ENCODE measurements at regions of chr20 and their contacts with region 1.

Region 1: DNA sequence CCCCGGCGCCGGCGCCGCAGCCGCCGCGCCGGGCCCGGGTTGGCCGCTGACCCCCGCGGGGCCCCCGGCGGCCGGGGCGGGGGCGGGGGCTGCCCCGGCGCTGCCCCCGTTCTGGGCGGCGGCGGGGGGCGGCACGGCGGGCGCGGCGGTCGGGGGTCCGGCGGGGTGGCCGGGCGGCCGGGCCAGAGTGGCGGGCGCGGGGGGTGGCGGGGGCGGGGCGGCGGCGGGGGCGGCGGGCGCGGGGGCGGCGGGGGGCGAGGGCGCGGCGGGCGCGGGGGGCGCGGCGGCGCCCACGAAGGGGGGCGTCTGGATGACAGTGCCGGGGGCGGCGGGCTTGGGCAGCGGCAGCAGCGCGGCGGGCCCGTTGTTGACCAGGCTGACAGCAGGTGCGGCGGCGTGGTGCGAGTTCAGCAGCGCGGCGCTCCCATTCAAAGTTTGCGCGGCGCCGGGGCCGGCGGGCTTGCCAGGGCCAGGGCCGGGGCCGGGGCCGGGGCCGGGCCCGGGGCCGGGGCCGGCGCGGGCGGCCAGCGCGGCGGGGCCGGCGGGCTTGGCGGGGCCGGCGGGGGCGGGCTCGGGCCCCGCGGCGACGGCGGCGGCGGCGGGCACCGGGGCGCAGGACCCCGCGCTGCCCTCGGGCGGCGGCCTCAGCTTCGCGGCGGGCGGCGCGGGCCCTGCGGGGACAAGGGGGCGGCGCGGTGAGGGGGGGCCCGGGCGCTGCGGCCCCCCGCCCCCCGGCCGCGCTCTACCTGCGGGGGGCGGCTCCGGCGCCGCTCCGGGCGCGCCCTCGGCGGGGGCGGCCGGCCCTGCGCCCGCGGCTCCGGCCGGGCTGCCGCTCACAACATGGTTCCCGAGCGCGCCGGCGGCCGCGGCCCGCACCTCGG is 653 bp downstream of the TAF4 start:
- DNase-seq: no peak
- H3K4me3 ChIP-seq: peak overlapping the region; percentile 67 to 86 (median 74)
- H3K27ac ChIP-seq: peak overlapping the region; percentile 75 to 93 (median 87)
- H3K4me1 ChIP-seq: peaks cover 36 to 48% (median 40%) of the 10 kb centered on the region in 4 donors
- H3K27me3 ChIP-seq: no peaks in the 10 kb centered on the region
- CTCF ChIP-seq: no peak
- EP300 ChIP-seq: no peak
- POLR2A ChIP-seq: no peak

Region 2: DNA sequence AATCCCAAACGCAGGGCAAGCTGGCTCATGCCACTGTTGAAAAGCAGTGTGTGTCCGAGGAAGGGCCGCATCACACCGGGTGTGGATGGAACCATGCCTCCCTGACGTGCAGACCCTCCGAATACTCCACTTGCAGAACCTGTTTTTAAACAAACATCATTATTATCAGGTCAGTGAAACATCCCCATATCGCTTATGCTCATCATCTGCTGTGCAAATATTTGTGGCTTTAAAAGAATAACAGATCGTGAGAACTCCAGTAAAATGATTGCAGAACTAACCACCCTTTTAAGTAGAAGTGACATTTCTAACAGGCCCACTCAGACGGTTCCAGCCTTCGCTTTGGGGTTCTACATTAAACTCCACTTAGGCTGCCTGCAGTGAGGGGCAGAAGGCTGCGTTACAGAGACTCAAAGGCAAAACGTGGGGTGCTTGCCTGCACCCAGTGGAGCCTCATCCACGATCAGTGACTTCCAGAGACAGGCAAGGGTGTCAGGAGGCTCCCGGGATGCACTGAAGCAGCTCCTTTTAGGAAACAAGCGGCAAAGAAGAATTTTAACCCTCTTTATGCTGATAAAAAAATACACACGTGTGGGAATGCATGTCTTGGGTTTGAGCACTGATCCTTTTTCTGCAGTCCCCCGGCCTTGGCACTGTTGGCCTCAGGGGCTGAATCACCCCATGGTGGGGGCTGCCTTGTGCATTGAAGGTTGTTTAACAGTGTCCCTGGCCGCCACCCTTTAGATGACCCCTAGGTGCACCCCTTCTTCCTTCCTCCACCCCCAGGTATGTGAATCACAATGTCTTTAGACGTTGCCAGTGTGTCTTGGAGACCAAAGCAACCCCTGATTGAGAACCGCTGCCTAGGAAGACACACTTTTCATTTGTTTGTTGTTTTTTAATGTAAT is 622.6 kb before region 1 on chr20:
- intact Hi-C with region 1: no loop called
- DNase-seq: no peak
- H3K4me3 ChIP-seq: no peak overlapping the region
- H3K27ac ChIP-seq: no peak overlapping the region
- H3K4me1 ChIP-seq: peaks cover 0 to 3% (median 0%) of the 10 kb centered on the region in 4 donors
- H3K27me3 ChIP-seq: peaks cover 0 to 7% (median 0%) of the 10 kb centered on the region in 4 donors
- CTCF ChIP-seq: no peak
- EP300 ChIP-seq: no peak
- POLR2A ChIP-seq: no peak

Region 3: DNA sequence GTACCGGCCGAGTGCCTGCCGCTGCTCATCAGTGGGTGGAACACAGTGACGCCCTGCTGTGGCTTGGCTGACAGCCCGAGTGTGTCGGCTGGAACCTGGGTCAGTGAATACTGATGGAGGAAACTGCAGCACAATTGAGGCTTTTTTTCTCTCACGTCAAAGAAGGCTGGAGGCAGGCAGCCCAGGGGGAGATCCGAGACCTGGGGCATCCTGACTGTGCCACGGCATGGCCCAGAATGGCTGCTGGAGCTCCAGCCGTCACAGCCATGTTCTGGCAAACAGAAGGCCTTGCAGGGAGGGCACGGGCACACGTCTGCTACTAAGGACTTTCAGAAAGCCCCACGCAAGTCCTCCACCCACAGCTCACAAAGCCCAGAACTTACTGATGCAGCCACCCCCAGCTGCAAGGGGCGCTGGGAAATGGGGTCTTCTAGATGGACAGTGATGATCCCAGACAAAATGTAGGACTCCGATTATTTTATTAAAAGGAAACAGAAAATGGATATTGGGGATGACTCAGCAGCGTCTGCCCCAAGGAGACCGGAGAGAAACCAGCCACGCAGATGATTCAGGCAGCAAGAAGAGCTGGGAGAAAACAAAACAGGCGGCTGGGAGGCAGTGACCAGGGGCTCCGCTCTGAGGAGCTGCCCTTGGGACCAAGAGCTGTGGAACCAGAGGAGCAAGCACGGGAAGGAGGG is 139.3 kb before region 1 on chr20:
- intact Hi-C with region 1: no loop called
- DNase-seq: no peak
- H3K4me3 ChIP-seq: no peak overlapping the region
- H3K27ac ChIP-seq: no peak overlapping the region
- H3K4me1 ChIP-seq: no peaks in the 10 kb centered on the region
- H3K27me3 ChIP-seq: peaks cover 0 to 24% (median 0%) of the 10 kb centered on the region in 4 donors
- CTCF ChIP-seq: no peak
- EP300 ChIP-seq: no peak
- POLR2A ChIP-seq: no peak

Region 4: DNA sequence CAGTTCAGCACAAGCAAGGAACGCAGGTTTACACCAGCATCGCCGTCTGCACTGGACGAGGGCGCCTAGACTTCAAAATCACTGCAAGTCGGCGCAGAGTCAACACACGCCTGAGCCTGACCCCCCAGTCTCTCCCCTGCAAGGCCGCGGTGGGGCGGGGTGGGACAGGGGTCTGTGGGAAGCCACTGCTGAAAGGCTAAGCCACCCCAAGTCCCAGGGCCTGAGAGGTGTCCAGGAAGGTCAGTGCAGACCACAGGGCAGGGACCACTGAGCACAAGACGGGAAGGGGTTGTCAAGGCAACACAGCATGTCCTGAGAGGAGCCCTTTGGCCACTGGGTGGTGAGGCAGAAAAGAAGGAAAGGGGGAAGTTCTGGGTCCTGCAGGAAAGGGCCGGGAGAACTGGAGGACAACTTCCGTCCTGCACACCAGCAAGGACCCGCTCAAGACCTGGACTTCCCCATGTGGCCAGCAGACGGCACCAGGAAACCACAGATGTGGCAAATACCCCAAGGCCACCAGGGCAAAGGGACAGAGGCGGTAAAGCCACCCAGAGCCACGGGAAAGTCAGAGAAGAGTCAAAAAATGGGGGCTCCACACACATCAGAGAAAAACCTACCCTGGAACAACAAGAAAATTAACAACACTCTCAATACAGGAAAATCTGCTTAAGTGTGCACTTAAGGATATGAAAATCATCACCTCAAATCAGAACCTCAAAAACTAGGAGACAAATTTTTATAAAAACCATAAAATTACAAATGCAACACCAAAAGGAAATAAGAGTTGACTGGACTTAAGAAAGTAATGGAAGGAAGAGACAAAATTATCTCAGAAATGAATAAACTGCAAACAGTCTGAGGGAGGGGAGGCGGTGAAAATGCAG is 84.1 kb before region 1 on chr20:
- intact Hi-C with region 1: no loop called
- DNase-seq: no peak
- H3K4me3 ChIP-seq: no peak overlapping the region
- H3K27ac ChIP-seq: no peak overlapping the region
- H3K4me1 ChIP-seq: no peaks in the 10 kb centered on the region
- H3K27me3 ChIP-seq: no peaks in the 10 kb centered on the region
- CTCF ChIP-seq: peak; percentile 29 to 67 (median 54)
- EP300 ChIP-seq: no peak
- POLR2A ChIP-seq: no peak

Region 5: GRCh38 chr20:62025832-62026563 is 39.0 kb before region 1 on chr20:
- intact Hi-C with region 1: loop called (anchors 5 kb)
- DNase-seq: no peak
- H3K4me3 ChIP-seq: no peak overlapping the region
- H3K27ac ChIP-seq: peak overlapping the region in 2 of 4 donors; percentile 17 to 34
- H3K4me1 ChIP-seq: peaks cover 34 to 64% (median 48%) of the 10 kb centered on the region in 4 donors
- H3K27me3 ChIP-seq: peaks cover 0 to 4% (median 0%) of the 10 kb centered on the region in 4 donors
- CTCF ChIP-seq: peak; percentile 43 to 72 (median 61)
- EP300 ChIP-seq: no peak
- POLR2A ChIP-seq: no peak

Region 6: GRCh38 chr20:62121776-62122631 is 57.0 kb after region 1 on chr20 and contains the start of gene LSM14B:
- intact Hi-C with region 1: no loop called
- DNase-seq: peak; percentile 99
- H3K4me3 ChIP-seq: peak within 1 kb of the TSS; percentile 86 to 99 (median 93)
- H3K27ac ChIP-seq: peak within 1 kb of the TSS; percentile 91 to 98 (median 96)
- H3K4me1 ChIP-seq: peaks cover 26 to 44% (median 33%) of the 10 kb centered on the region in 4 donors
- H3K27me3 ChIP-seq: peaks cover 0 to 26% (median 2%) of the 10 kb centered on the region in 4 donors
- CTCF ChIP-seq: no peak
- EP300 ChIP-seq: no peak
- POLR2A ChIP-seq: no peak
- total RNA-seq, gene LSM14B: 24.9 to 38.8 (median 32.4) TPM